ENCODE measurements at regions of chr10 and their contacts with region 1.

Region 1: DNA sequence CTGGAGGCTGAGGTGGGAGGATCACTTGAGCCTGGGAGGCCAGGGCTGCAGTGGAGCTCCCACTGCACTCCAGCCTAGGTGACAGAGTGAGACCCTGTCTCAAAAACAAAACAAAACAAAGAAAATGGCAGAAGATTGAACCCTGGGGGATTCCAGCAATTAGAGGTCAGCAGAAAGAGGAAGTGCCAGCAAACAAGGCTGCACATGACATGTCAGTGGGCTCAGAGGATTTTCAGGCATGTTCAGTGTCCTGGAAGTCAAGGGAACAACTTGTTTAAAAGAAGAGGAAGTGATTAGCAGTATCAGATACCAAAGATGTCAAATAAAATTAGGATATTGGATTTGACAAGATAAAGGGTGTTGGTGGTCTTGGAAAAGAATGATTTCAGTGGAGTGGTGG is 32.3 kb downstream of the RAB18 start:
- DNase-seq: no peak
- H3K4me3 ChIP-seq: no peak overlapping the region
- CTCF ChIP-seq: no peak

Region 2: DNA sequence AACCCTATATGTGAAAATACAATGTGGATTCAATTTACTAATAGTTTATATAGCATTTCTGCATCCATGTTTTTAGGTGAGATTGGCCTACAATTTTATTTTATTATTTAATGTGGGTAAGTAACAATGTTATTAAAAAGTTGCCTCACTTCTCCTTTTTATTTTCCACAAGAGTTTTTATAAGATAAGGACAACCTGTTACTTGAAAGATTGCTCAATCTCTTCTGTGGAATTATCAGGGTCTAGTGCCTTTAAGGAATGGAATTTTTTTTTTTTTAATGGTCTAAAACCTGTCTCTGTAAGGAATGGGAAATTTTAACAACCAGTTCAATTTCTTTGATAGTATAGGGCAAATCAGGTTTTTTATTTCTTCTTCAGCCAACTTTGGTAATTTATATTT is 86.2 kb before region 1 on chr10:
- in situ Hi-C with region 1: loop called (anchors 5 kb)
- DNase-seq: no peak
- H3K4me3 ChIP-seq: no peak overlapping the region
- CTCF ChIP-seq: no peak

Measured in astrocyte of the cerebellum (primary cell).